Dendritic cell treated with granulocyte-macrophage colony-stimulating factor and Interleukin-4, amounts not matched to agents 40 ng/mL and 50 ng/mL, for 4 days (primary cell): ENCODE measurements at regions of chr5 and their contacts with region 1.

Region 1: DNA sequence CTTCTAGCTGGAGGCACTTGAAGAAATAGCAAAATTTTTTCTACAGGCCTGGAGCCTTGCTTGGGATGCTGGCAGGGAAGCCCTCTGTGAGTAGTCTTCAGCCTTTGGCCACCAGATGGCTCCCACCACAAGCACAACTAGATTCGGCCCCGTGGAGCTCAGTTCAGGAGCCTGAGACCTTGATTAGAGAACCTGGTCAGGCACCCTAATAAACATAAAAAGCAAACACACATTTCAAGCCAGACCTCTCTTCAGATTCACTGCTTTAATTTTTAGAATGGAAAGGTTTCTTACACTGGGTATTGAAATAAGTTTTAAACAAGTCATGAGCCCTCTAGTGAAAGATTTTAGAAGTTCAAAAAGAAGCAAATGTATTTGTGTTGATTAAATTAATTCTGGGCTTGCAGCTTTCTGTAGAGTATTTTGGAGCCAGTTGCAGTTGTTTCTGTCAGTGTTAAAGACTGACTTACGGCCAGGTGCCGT is 41.4 kb downstream of the GLRX start:
- H3K4me3 Mint-ChIP-seq: peak overlapping the region; percentile 17
- H3K27ac Mint-ChIP-seq: peak overlapping the region; percentile 65
- H3K4me1 Mint-ChIP-seq: peaks cover 36% of the 10 kb centered on the region
- H3K27me3 Mint-ChIP-seq: no peaks in the 10 kb centered on the region

Region 2: DNA sequence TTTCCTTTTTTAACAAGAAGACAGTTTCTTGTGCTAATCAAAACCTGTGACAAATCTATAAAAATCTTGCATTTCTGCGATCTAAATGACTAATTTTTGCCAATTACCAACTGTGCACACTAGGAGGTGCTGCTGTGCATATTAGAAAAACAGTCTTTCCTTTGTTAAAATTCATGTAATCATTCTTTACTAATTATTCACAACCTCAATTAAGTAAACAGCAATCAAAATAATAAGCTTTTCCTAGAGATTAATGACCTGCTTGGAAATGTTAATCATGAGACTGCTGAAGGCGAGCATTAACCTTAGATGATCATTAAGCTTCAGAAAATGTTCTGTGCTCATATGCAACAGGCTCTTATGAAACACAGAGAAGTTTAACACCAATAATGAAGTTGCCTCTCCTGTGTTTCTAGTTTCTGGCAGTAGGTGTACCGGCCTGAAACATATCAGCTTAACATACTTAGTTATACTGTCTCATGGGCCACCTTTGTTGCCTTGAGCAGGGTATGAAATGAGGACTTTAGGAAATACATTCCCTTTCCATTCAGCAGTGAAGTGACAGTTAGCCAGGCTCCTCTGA is 116.8 kb before region 1 on chr5:
- intact Hi-C with region 1: loop called (anchors 1 kb)
- H3K4me3 Mint-ChIP-seq: no peak overlapping the region
- H3K27ac Mint-ChIP-seq: no peak overlapping the region
- H3K4me1 Mint-ChIP-seq: no peaks in the 10 kb centered on the region
- H3K27me3 Mint-ChIP-seq: no peaks in the 10 kb centered on the region

Region 3: GRCh38 chr5:95817440-95817839 is 36.3 kb after region 1 on chr5:
- intact Hi-C with region 1: loop called (anchors 5 kb)
- H3K4me3 Mint-ChIP-seq: peak overlapping the region; percentile 75
- H3K27ac Mint-ChIP-seq: peak overlapping the region; percentile 74
- H3K4me1 Mint-ChIP-seq: peaks cover 73% of the 10 kb centered on the region
- H3K27me3 Mint-ChIP-seq: no peaks in the 10 kb centered on the region